Activated CD4-positive, alpha-beta memory T cell treated with anti-CD3 and anti-CD28 coated beads for 36 hours (primary cell): ENCODE measurements at regions of chr9 and their contacts with region 1.

Region 1: GRCh38 chr9:37465249-37466036 is at the start of gene ZBTB5:
- DNase-seq: peak; percentile 99
- H3K4me3 Mint-ChIP-seq: peak within 1 kb of the TSS; percentile 97
- H3K27ac Mint-ChIP-seq: peak within 1 kb of the TSS; percentile 95
- H3K4me1 Mint-ChIP-seq: peaks cover 29% of the 10 kb centered on the region
- H3K27me3 Mint-ChIP-seq: no peaks in the 10 kb centered on the region
- total RNA-seq, gene ZBTB5: 8.3 to 9.3 TPM

Region 2: DNA sequence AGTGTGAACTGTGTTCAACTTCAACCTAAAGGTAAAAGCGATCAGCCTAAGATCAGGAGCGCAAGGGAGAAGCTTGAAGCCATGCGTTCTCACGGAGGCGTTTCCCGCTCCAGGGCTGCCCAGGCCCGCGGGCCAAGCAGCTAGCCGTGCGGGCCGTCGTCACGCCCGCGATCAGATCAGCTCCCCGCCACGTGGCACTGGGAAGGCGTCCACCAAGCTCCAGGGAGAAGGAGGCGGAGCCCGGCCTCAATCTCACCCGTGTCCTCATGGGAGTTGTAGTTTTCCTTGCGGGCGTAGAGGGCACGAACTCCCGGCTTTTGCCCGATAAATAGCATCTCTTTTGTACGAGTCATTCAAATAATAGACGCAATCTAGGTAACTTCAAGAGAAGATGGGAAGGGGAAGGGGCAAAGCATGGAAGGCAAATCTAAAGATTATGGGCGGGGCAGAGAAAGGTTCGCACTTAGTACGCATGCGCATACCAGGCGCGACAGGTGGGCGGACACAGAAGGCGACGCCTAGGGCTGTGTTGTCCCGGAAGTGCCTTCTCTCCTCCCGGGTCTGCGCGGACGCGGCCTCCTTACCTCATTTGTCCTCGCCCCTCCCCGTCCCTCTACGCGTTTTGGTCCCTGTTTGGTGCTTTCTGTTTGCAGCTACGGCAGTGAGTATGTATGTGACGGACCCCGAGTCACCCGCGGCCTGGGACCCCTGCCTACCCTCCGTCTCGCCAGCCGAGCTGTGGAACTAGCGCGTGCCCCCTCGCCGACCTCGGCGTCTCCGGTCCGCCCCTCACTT is 385.9 kb before region 1 on chr9:
- CTCF ChIA-PET with region 1: no interaction called
- POLR2A ChIA-PET with region 1: no interaction called
- intact Hi-C with region 1: loop called (anchors 1 kb)
- DNase-seq: peak; percentile 96
- H3K4me3 Mint-ChIP-seq: peak overlapping the region; percentile 98
- H3K27ac Mint-ChIP-seq: peak overlapping the region; percentile 93
- H3K4me1 Mint-ChIP-seq: peaks cover 46% of the 10 kb centered on the region
- H3K27me3 Mint-ChIP-seq: peaks cover 8% of the 10 kb centered on the region

Region 3: GRCh38 chr9:37119907-37120842 is 345.3 kb before region 1 on chr9 and contains the start of gene ZCCHC7:
- CTCF ChIA-PET with region 1: no interaction called
- POLR2A ChIA-PET with region 1: interaction called, 3 read pairs
- intact Hi-C with region 1: loop called (anchors 1 kb)
- DNase-seq: peak; percentile 98
- H3K4me3 Mint-ChIP-seq: peak within 1 kb of the TSS; percentile 92
- H3K27ac Mint-ChIP-seq: peak within 1 kb of the TSS; percentile 92
- H3K4me1 Mint-ChIP-seq: peaks cover 33% of the 10 kb centered on the region
- H3K27me3 Mint-ChIP-seq: no peaks in the 10 kb centered on the region
- total RNA-seq, gene ZCCHC7: 26.8 to 28.1 TPM

Region 4: GRCh38 chr9:37422289-37423104 is 42.9 kb before region 1 on chr9 and contains the start of gene GRHPR:
- CTCF ChIA-PET with region 1: no interaction called
- POLR2A ChIA-PET with region 1: interaction called, 7 read pairs
- intact Hi-C with region 1: loop called (anchors 1 kb)
- DNase-seq: peak; percentile 93
- H3K4me3 Mint-ChIP-seq: peak within 1 kb of the TSS; percentile 80
- H3K27ac Mint-ChIP-seq: peak within 1 kb of the TSS; percentile 86
- H3K4me1 Mint-ChIP-seq: peaks cover 29% of the 10 kb centered on the region
- H3K27me3 Mint-ChIP-seq: no peaks in the 10 kb centered on the region
- total RNA-seq, gene GRHPR: 84.1 to 85.0 TPM

Region 5: DNA sequence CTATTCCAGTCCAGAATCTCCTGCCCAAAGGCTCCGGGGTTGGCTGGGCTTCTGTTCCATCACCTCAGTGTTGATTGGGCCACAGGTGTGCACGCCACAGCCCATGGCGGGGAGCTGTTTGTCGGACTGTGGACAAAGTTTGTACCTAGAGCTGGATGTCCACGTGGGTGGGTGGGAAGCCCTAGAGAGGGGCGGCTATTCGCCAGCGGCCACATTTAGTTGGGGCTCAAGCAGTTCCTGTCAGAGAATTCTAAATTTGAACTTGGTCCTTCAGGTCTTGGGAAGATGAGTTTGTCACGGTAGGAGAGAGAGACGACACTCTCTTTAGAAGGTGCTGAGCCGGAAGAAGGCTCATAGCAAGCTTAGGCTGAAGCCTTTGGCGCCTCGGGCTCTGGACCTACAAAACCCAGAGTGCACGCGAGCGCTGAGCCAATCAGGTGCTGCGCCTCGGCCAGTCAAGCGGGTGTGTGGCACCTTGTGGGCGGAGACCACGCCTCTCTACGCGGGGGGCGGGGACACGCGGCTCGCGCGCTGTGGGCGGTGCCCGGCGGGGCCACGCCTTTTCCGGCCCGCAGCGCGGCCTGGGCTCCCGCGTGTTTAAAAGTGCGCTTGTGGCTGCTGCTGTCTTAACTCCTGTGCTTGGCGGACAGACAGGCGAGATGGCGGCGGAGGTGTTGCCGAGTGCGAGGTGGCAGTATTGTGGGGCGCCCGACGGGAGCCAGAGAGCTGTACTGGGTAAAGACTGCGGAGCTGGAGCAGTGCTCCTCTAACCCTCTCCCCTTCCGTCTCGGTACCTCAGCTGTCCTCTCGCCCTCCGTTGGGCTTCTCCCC is 20.2 kb after region 1 on chr9 and contains the start of gene POLR1E:
- CTCF ChIA-PET with region 1: interaction called, 6 read pairs
- POLR2A ChIA-PET with region 1: interaction called, 23 read pairs
- intact Hi-C with region 1: loop called (anchors 1 kb)
- DNase-seq: peak; percentile 97
- H3K4me3 Mint-ChIP-seq: peak within 1 kb of the TSS; percentile 88
- H3K27ac Mint-ChIP-seq: peak within 1 kb of the TSS; percentile 91
- H3K4me1 Mint-ChIP-seq: peaks cover 35% of the 10 kb centered on the region
- H3K27me3 Mint-ChIP-seq: peaks cover 6% of the 10 kb centered on the region
- total RNA-seq, gene POLR1E: 56.7 to 58.0 TPM

Region 6: GRCh38 chr9:37528652-37529510 is 63.4 kb after region 1 on chr9:
- CTCF ChIA-PET with region 1: no interaction called
- POLR2A ChIA-PET with region 1: interaction called, 3 read pairs
- intact Hi-C with region 1: loop called (anchors 1 kb)
- DNase-seq: peak; percentile 93
- H3K4me3 Mint-ChIP-seq: peak overlapping the region; percentile 71
- H3K27ac Mint-ChIP-seq: peak overlapping the region; percentile 94
- H3K4me1 Mint-ChIP-seq: peaks cover 42% of the 10 kb centered on the region
- H3K27me3 Mint-ChIP-seq: no peaks in the 10 kb centered on the region